ENCODE measurements at regions of chr3 and their contacts with region 1.

Region 1: DNA sequence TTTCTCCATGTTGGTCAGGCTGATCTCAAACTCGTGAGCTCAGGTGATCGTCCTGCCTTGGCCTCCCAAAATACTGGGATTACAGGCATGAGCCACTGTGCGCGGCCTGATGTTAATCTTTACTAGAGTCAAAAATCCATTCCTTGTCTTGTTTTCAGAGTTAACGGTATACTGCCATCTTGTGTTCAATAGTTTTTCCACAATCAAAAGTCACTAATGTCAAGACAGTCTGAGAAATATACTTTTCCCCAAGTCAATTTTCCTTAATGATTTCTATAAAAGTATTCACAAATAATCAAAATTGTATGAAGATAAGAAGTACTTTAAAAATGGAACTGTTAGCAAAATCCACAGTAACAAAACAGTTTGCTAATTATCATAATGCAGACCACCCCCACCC is 8.5 kb downstream of the CRBN start:
- DNase-seq: no peak
- H3K4me3 Mint-ChIP-seq: peak overlapping the region; percentile 66
- H3K27ac Mint-ChIP-seq: peak overlapping the region; percentile 27
- H3K4me1 Mint-ChIP-seq: peaks cover 45% of the 10 kb centered on the region
- H3K27me3 Mint-ChIP-seq: no peaks in the 10 kb centered on the region

Region 2: DNA sequence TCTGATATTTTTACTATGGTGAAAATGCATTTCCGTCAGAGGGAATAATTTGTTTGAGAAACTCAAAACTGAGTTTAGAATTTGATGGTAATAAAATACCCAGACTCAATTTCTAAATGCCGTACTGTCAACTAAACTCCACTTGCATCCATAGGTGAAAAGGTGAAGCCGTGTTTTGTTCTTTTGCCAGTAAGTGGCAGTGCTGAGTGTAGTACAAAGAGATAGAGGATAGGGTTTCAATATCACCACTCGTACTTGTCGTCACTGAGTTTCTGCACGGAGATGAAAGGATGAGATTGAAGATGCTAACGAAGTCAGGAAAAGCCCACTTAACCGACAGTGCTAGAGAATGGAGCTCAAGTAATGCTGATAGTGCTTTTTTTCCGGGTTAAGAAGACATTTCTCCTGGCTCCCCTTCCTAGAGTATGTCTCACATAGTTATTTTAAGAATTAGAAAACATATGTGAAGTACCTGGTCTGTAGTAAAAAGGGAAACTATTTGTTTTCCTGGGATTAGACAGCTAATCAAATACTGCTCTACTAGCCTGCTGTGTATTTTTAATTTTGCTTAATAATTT is 405.9 kb before region 1 on chr3:
- intact Hi-C with region 1: loop called (anchors 5 kb)
- DNase-seq: no peak
- H3K4me3 Mint-ChIP-seq: no peak overlapping the region
- H3K27ac Mint-ChIP-seq: no peak overlapping the region
- H3K4me1 Mint-ChIP-seq: no peaks in the 10 kb centered on the region
- H3K27me3 Mint-ChIP-seq: no peaks in the 10 kb centered on the region

Region 3: DNA sequence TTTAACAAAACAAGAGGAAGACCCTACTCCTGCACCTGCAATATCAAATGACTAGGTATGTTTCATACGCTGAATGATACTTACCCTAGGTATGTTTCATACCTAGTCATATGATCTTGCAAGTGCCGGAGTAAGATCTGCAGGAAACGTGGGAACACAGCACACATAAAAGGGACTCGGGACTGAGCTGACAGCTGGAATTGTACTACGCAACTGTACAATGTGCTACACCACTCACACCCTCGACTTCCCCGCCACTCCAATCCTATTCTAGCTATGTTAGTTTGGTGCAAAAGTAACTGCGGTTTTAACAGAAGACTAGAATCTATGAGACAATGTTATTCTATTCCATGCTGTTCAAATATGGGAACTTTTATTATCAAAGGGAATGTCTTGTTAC is 13.5 kb before region 1 on chr3:
- intact Hi-C with region 1: loop called (anchors 2 kb)
- DNase-seq: no peak
- H3K4me3 Mint-ChIP-seq: no peak overlapping the region
- H3K27ac Mint-ChIP-seq: no peak overlapping the region
- H3K4me1 Mint-ChIP-seq: no peaks in the 10 kb centered on the region
- H3K27me3 Mint-ChIP-seq: no peaks in the 10 kb centered on the region

Measured in activated T-helper 1 cell treated with anti-CD3 and anti-CD28 coated beads, Interleukin-12 subunit alpha, Interleukin-12 subunit beta, Interleukin-2, Interleukin-4 antibody, amounts not matched to agents 30 ng/mL and 10 ng/mL and 1 ng/mL, durations not matched to agents 14 hours and 24 hours and 36 hours (primary cell).